K562 (cell line): ENCODE measurements at regions of chr7 and their contacts with region 1.

Region 1: DNA sequence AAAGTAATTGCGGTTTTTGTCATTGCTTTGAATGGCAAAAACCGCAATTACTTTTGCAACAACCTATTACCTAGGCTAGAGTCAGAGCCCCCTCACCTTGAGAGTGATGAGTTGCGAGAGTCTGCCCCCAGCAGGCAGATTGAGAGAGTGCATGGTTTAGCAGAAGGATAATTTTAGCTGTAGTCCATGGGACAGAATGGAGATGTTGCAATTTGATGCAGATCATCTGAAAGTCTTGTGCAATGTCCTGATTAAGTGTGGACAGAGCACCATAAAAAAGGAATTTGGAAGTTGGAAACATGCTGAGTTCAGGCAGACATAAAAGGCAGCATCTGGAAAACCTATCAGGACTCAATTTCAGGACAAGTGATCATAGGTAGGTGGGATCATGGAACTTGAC is 48.7 kb downstream of the GPR141 start:
- DNase-seq: peak; percentile 17 to 51 (median 26)
- ATAC-seq: peak; percentile 75; the same call in 2 of the 3 replicates
- H3K4me3 ChIP-seq: no peak overlapping the region
- H3K27ac ChIP-seq: no peak overlapping the region
- H3K4me1 ChIP-seq: no peaks in the 10 kb centered on the region; a peak in 1 of 5 replicates
- H3K27me3 ChIP-seq: no peaks in the 10 kb centered on the region
- CTCF ChIP-seq: peak; percentile 49 to 61 (median 53)
- EP300 ChIP-seq: no peak
- POLR2A ChIP-seq: no peak
- RAD21 ChIP-seq: peak; percentile 62 to 72

Region 2: GRCh38 chr7:37225285-37225969 is 506.8 kb before region 1 on chr7:
- CTCF ChIA-PET with region 1: no interaction called
- POLR2A ChIA-PET with region 1: no interaction called
- in situ Hi-C with region 1: no loop called
- intact Hi-C with region 1: loop called (anchors 10 kb)
- DNase-seq: no peak
- ATAC-seq: no peak
- H3K4me3 ChIP-seq: no peak overlapping the region
- H3K27ac ChIP-seq: no peak overlapping the region
- H3K4me1 ChIP-seq: no peaks in the 10 kb centered on the region
- H3K27me3 ChIP-seq: no peaks in the 10 kb centered on the region; a peak in 2 of 5 replicates
- CTCF ChIP-seq: no peak
- EP300 ChIP-seq: no peak
- POLR2A ChIP-seq: no peak
- RAD21 ChIP-seq: no peak

Region 3: GRCh38 chr7:37235813-37236212 is 496.4 kb before region 1 on chr7:
- CTCF ChIA-PET with region 1: no interaction called
- POLR2A ChIA-PET with region 1: no interaction called
- in situ Hi-C with region 1: no loop called
- intact Hi-C with region 1: no loop called
- DNase-seq: no peak
- ATAC-seq: no peak
- H3K4me3 ChIP-seq: no peak overlapping the region
- H3K27ac ChIP-seq: no peak overlapping the region
- H3K4me1 ChIP-seq: no peaks in the 10 kb centered on the region
- H3K27me3 ChIP-seq: peaks cover 0 to 4% of the 10 kb centered on the region in 2 experiments; a peak in 2 of 5 replicates
- CTCF ChIP-seq: no peak
- EP300 ChIP-seq: no peak
- POLR2A ChIP-seq: no peak
- RAD21 ChIP-seq: no peak

Region 4: DNA sequence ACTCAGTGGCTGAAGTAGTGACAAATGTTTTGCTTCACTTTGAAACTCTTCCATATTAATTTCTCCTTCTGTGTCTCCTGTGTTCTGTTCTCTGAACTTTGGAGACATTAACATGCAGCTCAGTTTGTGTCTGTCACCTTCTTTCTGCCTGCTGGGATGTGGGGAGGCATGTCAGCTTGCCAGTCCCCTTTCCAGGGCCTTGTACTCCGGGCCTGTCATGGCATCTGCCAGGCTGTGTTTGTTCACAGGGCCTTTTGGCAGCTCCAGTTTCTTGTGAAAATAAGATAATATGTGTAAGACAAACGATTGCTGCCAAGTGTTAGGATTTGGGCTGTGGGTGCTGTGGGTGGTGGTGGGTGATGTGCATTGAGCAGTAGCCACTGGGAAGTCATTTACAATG is 207.5 kb before region 1 on chr7:
- CTCF ChIA-PET with region 1: no interaction called
- POLR2A ChIA-PET with region 1: no interaction called
- in situ Hi-C with region 1: no loop called
- intact Hi-C with region 1: loop called (anchors 10 kb)
- DNase-seq: no peak
- ATAC-seq: no peak
- H3K4me3 ChIP-seq: no peak overlapping the region
- H3K27ac ChIP-seq: no peak overlapping the region
- H3K4me1 ChIP-seq: no peaks in the 10 kb centered on the region
- H3K27me3 ChIP-seq: no peaks in the 10 kb centered on the region
- CTCF ChIP-seq: no peak
- EP300 ChIP-seq: no peak
- POLR2A ChIP-seq: no peak
- RAD21 ChIP-seq: no peak

Region 5: GRCh38 chr7:37973915-37974314 is 241.7 kb after region 1 on chr7:
- CTCF ChIA-PET with region 1: no interaction called
- POLR2A ChIA-PET with region 1: no interaction called
- in situ Hi-C with region 1: no loop called
- intact Hi-C with region 1: no loop called
- DNase-seq: peak; percentile 39 to 84 (median 62)
- ATAC-seq: peak; percentile 96
- H3K4me3 ChIP-seq: no peak overlapping the region
- H3K27ac ChIP-seq: peak overlapping the region; percentile 80
- H3K4me1 ChIP-seq: peaks cover 4 to 30% of the 10 kb centered on the region in 2 experiments; a peak in 4 of 5 replicates
- H3K27me3 ChIP-seq: no peaks in the 10 kb centered on the region
- CTCF ChIP-seq: no peak
- EP300 ChIP-seq: peak; percentile 83; the same call in 1 of the 2 replicates
- POLR2A ChIP-seq: no peak
- RAD21 ChIP-seq: no peak